Psoas muscle (tissue), 8 donors: ENCODE measurements at regions of chr16 and their contacts with region 1.

Region 1: GRCh38 chr16:48385272-48386150 is at the start of gene SIAH1:
- DNase-seq: peak; percentile 88 to 92
- ATAC-seq: peak; percentile 88 to 91 (median 89)
- H3K4me3 ChIP-seq: peak within 1 kb of the TSS; percentile 74
- H3K27ac ChIP-seq: peak within 1 kb of the TSS; percentile 100
- H3K4me1 ChIP-seq: peaks cover 38% of the 10 kb centered on the region
- H3K27me3 ChIP-seq: no peaks in the 10 kb centered on the region
- CTCF ChIP-seq: no peak
- total RNA-seq, gene SIAH1: 16.2 to 26.0 (median 18.6) TPM

Region 2: GRCh38 chr16:46996391-46996790 is 1389.1 kb before region 1 on chr16:
- intact Hi-C with region 1: no loop called
- DNase-seq: no peak
- ATAC-seq: no peak
- H3K4me3 ChIP-seq: no peak overlapping the region
- H3K27ac ChIP-seq: no peak overlapping the region
- H3K4me1 ChIP-seq: no peaks in the 10 kb centered on the region
- H3K27me3 ChIP-seq: no peaks in the 10 kb centered on the region
- CTCF ChIP-seq: no peak

Region 3: GRCh38 chr16:48365581-48366164 is 19.8 kb before region 1 on chr16:
- intact Hi-C with region 1: loop called in 1 of 2 experiments (anchors 2 kb)
- DNase-seq: peak; percentile 92 to 94
- ATAC-seq: peak; percentile 96 to 97 (median 96)
- H3K4me3 ChIP-seq: peak overlapping the region; percentile 71
- H3K27ac ChIP-seq: peak overlapping the region; percentile 88
- H3K4me1 ChIP-seq: peaks cover 61% of the 10 kb centered on the region
- H3K27me3 ChIP-seq: no peaks in the 10 kb centered on the region
- CTCF ChIP-seq: no peak